ENCODE measurements at regions of chr4 and their contacts with region 1.

Region 1: DNA sequence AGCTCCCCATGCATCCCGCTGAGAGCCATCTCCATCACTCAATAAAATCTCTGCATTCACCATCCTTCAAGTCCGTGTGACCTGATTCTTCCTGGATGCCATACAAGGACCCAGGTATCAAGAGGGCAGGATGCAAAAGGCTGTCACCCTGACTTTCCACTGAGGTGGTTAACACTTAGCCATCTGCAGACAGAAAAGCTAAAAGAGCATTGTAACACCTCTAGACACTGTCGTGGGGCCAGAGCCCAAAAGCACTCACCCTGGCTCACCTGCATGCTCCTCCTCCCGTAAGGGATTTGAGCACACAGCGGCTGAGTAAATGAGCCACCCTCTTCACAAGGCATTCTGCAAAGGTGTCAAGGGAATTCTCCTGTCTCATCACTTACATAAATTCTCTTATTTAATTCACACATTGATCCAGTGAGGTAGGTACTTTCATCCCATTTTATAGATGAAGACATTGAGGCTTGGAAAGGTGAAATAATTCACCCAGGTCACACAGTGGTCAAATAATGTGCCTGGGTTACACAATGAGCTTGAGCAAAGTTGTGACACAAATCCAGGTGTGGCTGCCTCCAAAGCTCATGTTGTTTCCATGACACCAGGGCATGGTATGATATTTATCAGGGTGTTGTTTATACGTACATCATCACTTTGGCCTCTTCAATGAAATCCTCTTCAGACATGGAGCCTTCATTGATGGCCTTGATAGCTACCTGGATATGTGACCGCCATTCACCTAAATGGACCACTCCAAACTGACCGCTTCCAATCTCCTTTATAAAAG is 48.0 kb downstream of the TXK start:
- DNase-seq: no peak
- H3K4me3 Mint-ChIP-seq: no peak overlapping the region
- H3K27ac Mint-ChIP-seq: no peak overlapping the region
- H3K4me1 Mint-ChIP-seq: no peaks in the 10 kb centered on the region
- H3K27me3 Mint-ChIP-seq: peaks cover 14% of the 10 kb centered on the region

Region 2: DNA sequence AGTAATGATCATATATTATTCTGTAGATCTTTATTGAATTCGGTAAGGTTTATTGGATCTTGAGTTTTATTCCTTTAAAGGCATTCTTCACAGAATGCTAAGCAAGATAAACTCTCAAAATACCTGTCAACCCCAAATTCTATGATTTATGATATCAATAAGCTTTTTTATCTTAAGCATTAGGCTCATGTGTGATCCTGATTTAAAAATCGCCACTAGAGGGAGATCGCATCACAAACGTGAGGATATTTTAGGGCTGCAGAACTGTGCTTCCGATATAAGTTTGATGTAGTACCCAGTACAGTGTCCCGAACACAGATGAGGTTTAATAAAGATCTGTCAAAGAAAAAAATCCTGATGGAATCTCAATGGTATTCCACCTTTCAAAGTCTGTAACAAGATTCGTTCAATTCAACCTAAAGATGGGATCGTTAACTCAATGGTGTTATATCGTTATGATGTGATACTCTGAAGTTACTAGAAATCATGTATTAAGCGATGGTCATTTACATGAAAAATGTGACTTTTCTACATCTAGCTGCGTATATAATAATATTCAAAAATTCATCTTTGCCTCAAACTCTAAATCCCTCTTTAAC is 417.1 kb before region 1 on chr4:
- intact Hi-C with region 1: loop called (anchors 5 kb)
- DNase-seq: no peak
- H3K4me3 Mint-ChIP-seq: no peak overlapping the region
- H3K27ac Mint-ChIP-seq: no peak overlapping the region
- H3K4me1 Mint-ChIP-seq: peaks cover 2% of the 10 kb centered on the region
- H3K27me3 Mint-ChIP-seq: peaks cover 12% of the 10 kb centered on the region

Region 3: DNA sequence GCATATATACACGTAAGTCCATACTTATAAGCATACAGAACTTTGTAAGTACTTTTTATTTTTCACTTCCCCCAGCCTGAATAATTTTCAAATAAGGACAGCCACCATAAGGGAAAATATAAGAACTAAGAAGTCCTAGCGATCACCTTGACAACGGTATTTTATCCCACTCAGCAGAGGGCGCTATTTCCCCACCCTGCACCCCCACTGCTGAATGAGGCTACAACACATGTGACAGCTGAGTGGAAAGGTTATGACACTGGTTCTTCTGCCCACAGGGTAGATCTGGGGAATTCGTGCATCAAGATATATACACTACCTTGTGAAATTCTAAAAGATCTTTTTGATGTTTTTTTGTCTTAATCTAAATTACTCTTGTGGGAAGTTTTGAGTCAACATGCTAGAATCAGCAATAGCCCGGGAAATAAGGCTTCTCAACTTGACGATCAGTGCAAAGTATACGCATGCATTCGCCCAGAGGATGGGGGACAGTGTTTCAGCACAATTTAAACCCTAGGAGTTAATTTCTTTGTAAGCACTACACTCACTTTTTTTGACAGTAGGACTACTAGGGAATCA is 399.6 kb before region 1 on chr4:
- intact Hi-C with region 1: loop called (anchors 5 kb)
- DNase-seq: peak; percentile 32
- H3K4me3 Mint-ChIP-seq: no peak overlapping the region
- H3K27ac Mint-ChIP-seq: no peak overlapping the region
- H3K4me1 Mint-ChIP-seq: peaks cover 4% of the 10 kb centered on the region
- H3K27me3 Mint-ChIP-seq: peaks cover 15% of the 10 kb centered on the region

Region 4: GRCh38 chr4:47926639-47927258 is 159.3 kb before region 1 on chr4:
- intact Hi-C with region 1: loop called (anchors 1 kb)
- DNase-seq: peak; percentile 26
- H3K4me3 Mint-ChIP-seq: no peak overlapping the region
- H3K27ac Mint-ChIP-seq: no peak overlapping the region
- H3K4me1 Mint-ChIP-seq: peaks cover 7% of the 10 kb centered on the region
- H3K27me3 Mint-ChIP-seq: peaks cover 36% of the 10 kb centered on the region

Region 5: DNA sequence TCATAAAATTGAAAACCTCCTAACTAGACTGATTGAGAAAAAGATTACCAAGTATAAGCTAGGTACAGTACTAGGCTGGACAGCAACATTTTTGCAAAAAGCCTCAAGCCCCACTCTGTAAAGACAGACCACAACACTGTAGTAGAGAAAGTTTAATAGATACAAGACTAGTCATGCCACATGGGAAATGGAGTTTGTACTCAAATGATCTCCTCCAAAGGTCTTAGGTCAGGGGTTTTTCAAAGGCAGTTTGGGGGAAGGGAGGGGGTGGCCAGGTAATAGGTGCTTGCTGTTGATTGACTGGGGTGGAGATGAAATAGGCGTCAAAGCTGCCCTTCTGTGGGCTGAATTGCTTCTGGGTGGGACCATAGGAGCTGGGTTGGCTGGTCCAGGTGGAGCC is 83.7 kb before region 1 on chr4:
- intact Hi-C with region 1: loop called (anchors 2 kb)
- DNase-seq: no peak
- H3K4me3 Mint-ChIP-seq: no peak overlapping the region
- H3K27ac Mint-ChIP-seq: no peak overlapping the region
- H3K4me1 Mint-ChIP-seq: no peaks in the 10 kb centered on the region
- H3K27me3 Mint-ChIP-seq: no peaks in the 10 kb centered on the region

Region 6: GRCh38 chr4:48016141-48017103 is 69.6 kb before region 1 on chr4 and contains the starts of genes CNGA1 and NIPAL1:
- intact Hi-C with region 1: loop called (anchors 5 kb)
- DNase-seq: peak; percentile 30
- H3K4me3 Mint-ChIP-seq: peak within 1 kb of the TSS; percentile 66
- H3K27ac Mint-ChIP-seq: no peak within 1 kb of the TSS
- H3K4me1 Mint-ChIP-seq: peaks cover 17% of the 10 kb centered on the region
- H3K27me3 Mint-ChIP-seq: peaks cover 55% of the 10 kb centered on the region
- total RNA-seq, gene CNGA1: not detected in 2 replicates
- total RNA-seq, gene NIPAL1: 0.82 and 1.4 TPM in 2 replicates

Region 7: DNA sequence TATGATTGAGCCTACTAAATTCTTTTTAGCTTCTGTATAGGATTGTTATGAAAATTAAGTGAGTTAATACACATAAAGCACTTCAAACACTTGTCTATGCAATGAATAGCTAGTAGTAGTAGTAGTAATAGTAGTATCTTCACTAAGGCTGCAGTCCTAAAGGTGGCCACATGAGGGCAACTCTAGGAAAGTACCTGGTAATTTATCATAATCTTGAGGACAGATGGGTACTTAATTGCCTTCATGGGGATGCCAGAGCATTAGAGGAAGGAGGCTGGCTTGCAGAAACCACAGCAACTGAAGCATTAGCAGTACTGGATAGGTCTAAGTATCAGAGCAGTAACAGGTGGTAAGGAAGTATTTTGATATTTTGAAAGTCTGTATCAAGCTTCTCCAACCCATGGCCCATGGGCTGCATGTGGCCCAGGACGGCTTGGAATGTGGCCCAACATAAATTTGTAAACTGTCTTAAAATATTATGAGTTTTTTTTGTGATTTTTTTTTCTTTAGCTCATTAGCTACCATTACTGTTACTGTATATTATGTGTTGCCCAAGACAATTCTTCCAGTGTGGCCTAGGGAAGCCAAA is 52.1 kb before region 1 on chr4:
- intact Hi-C with region 1: loop called (anchors 1 kb)
- DNase-seq: no peak
- H3K4me3 Mint-ChIP-seq: no peak overlapping the region
- H3K27ac Mint-ChIP-seq: no peak overlapping the region
- H3K4me1 Mint-ChIP-seq: peaks cover 22% of the 10 kb centered on the region
- H3K27me3 Mint-ChIP-seq: peaks cover 39% of the 10 kb centered on the region

Region 8: DNA sequence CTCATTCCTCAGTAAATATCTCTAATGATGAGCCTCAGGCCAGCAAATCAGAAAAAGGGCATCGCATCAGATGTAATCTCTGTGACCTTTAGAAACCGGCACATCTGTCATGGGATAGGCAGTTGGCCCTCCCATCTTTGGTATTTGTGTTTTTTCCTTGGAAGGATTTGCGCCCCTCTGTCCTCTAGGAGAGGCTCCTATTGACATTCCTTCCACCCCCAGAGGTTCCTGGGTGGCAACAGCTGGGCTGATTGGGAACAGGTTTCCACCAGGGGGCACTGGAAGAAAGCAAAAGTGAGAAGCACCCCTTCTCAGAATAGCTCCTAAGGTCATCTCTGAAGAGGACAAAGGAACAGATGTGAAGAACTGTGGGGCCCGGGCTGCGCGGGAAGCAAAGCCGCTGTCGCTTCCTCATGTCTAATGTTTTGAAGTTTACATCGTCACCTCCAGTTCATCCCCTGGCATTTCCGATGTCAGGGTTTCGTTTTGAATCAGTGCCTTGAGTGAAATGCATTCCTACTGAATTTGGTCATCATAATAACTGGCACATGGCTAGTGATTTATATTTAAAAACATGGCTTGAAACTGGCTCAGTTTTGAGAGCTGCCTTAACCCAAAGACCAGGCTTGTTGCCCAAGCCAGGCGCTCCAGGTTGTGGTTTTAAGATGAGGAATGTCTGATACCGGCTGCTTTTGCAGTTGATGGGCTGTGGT is 41.8 kb after region 1 on chr4:
- intact Hi-C with region 1: no loop called
- DNase-seq: peak; percentile 72
- H3K4me3 Mint-ChIP-seq: peak overlapping the region; percentile 3
- H3K27ac Mint-ChIP-seq: peak overlapping the region; percentile 74
- H3K4me1 Mint-ChIP-seq: peaks cover 54% of the 10 kb centered on the region
- H3K27me3 Mint-ChIP-seq: peaks cover 2% of the 10 kb centered on the region

Measured in activated T-helper 2 cell treated with anti-CD3 and anti-CD28 coated beads, Interferon-gamma antibody, Interleukin-2, Interleukin-4, amounts not matched to agents 10 μg/mL and 5 μg/mL and 100 μg/mL, durations not matched to agents 14 hours and 24 hours and 36 hours (primary cell).